Activated T-helper 1 cell treated with anti-CD3 and anti-CD28 coated beads, Interleukin-12 subunit alpha, Interleukin-12 subunit beta, Interleukin-2, Interleukin-4 antibody, amounts not matched to agents 30 ng/mL and 10 ng/mL and 1 ng/mL, durations not matched to agents 14 hours and 24 hours and 36 hours (primary cell): ENCODE measurements at regions of chr10 and their contacts with region 1.

Region 1: GRCh38 chr10:32239770-32240169 is 107.2 kb downstream of the EPC1 start:
- DNase-seq: no peak
- H3K4me3 Mint-ChIP-seq: no peak overlapping the region
- H3K27ac Mint-ChIP-seq: no peak overlapping the region
- H3K4me1 Mint-ChIP-seq: peaks cover 16% of the 10 kb centered on the region
- H3K27me3 Mint-ChIP-seq: no peaks in the 10 kb centered on the region

Region 2: GRCh38 chr10:31928549-31929260 is 311.1 kb before region 1 on chr10 and contains the start of gene ARHGAP12:
- intact Hi-C with region 1: loop called (anchors 10 kb)
- DNase-seq: peak; percentile 68
- H3K4me3 Mint-ChIP-seq: peak within 1 kb of the TSS; percentile 88
- H3K27ac Mint-ChIP-seq: peak within 1 kb of the TSS; percentile 73
- H3K4me1 Mint-ChIP-seq: peaks cover 56% of the 10 kb centered on the region
- H3K27me3 Mint-ChIP-seq: peaks cover 13% of the 10 kb centered on the region
- total RNA-seq, gene ARHGAP12: 2.4 and 3.5 TPM in 2 replicates

Region 3: GRCh38 chr10:31947144-31947926 is 292.4 kb before region 1 on chr10:
- intact Hi-C with region 1: no loop called
- DNase-seq: no peak
- H3K4me3 Mint-ChIP-seq: no peak overlapping the region
- H3K27ac Mint-ChIP-seq: no peak overlapping the region
- H3K4me1 Mint-ChIP-seq: no peaks in the 10 kb centered on the region
- H3K27me3 Mint-ChIP-seq: peaks cover 5% of the 10 kb centered on the region

Region 4: GRCh38 chr10:32190890-32191491 is 48.8 kb before region 1 on chr10:
- intact Hi-C with region 1: loop called (anchors 1 kb)
- DNase-seq: no peak
- H3K4me3 Mint-ChIP-seq: no peak overlapping the region
- H3K27ac Mint-ChIP-seq: no peak overlapping the region
- H3K4me1 Mint-ChIP-seq: peaks cover 7% of the 10 kb centered on the region
- H3K27me3 Mint-ChIP-seq: no peaks in the 10 kb centered on the region

Region 5: GRCh38 chr10:32295027-32295426 is 55.3 kb after region 1 on chr10:
- intact Hi-C with region 1: no loop called
- DNase-seq: no peak
- H3K4me3 Mint-ChIP-seq: no peak overlapping the region
- H3K27ac Mint-ChIP-seq: no peak overlapping the region
- H3K4me1 Mint-ChIP-seq: peaks cover 29% of the 10 kb centered on the region
- H3K27me3 Mint-ChIP-seq: no peaks in the 10 kb centered on the region

Region 6: DNA sequence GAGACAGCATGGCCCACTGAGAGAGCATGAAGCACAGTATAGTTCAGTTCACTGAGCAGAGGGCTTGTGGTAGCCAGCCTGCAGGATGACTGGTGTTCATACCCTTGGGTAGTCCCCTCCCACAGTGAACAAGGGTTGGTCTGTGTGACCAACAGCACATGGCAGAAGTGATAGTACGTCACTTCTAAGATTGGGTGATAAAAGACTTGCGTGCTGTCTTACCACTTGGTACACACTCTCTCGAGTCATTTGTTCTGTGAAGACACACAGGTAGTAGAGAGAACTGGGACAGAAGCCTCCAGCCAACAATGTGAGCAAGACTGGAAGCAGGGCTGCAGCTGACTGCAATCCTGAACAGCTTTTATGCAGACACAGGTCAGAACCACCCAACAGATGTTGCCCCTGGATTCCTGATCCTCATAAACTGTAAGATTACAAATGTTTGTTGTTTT is 92.6 kb after region 1 on chr10:
- intact Hi-C with region 1: loop called (anchors 1 kb)
- DNase-seq: peak; percentile 71
- H3K4me3 Mint-ChIP-seq: peak overlapping the region; percentile 80
- H3K27ac Mint-ChIP-seq: peak overlapping the region; percentile 97
- H3K4me1 Mint-ChIP-seq: peaks cover 93% of the 10 kb centered on the region
- H3K27me3 Mint-ChIP-seq: no peaks in the 10 kb centered on the region

Region 7: DNA sequence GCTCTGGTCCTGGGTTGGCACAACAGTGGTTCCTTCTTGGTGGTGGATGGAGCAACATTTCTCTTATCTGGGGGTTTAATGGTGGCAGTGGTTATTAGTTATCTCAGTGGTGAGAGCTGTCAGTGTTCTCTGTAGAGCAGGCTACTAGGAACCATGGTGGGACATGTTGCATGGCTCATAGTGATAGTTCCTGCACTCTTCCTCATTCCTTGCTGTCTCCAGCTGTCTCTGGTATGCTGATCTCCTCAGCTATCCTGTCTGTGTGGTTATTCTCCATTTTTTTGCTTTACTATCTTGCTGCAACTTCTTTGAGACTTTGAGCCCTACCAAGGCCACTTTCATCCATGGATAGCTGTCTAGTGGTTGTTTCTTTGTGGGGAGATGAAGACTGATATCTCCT is 250.1 kb after region 1 on chr10:
- intact Hi-C with region 1: no loop called
- DNase-seq: no peak
- H3K4me3 Mint-ChIP-seq: no peak overlapping the region
- H3K27ac Mint-ChIP-seq: no peak overlapping the region
- H3K4me1 Mint-ChIP-seq: peaks cover 7% of the 10 kb centered on the region
- H3K27me3 Mint-ChIP-seq: no peaks in the 10 kb centered on the region

Region 8: GRCh38 chr10:33134011-33134751 is 894.4 kb after region 1 on chr10:
- intact Hi-C with region 1: loop called (anchors 1 kb)
- DNase-seq: peak; percentile 48
- H3K4me3 Mint-ChIP-seq: peak overlapping the region; percentile 48
- H3K27ac Mint-ChIP-seq: peak overlapping the region; percentile 88
- H3K4me1 Mint-ChIP-seq: peaks cover 61% of the 10 kb centered on the region
- H3K27me3 Mint-ChIP-seq: no peaks in the 10 kb centered on the region